ENCODE measurements at regions of chr11 and their contacts with region 1.

Region 1: DNA sequence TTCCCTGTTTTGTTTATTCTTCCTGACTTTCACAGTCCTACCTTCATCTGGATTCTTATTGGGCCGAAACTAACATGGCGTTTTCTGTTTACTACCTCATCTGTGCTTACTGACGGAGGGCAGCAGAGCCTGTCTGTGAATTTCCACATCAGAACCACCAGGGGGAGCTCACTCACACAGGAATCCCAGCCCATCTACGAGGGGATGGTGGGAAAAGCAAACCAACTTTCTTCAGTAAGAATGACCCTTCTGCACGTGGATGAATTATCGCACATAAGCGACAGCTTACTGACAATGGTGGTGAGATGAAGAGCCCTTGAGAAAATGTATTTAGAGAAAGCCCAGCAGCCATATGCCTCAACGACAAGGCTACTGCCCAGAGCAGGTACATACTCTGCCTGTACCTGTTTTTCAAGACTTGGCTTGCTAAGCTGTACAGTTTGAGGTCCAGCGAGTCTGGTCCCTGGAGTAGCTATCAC is 42.5 kb downstream of the LARGE2 start:
- DNase-seq: peak; percentile 38
- ATAC-seq: peak; percentile 98
- H3K4me3 ChIP-seq: no peak overlapping the region
- H3K27ac ChIP-seq: no peak overlapping the region
- H3K4me1 ChIP-seq: no peaks in the 10 kb centered on the region
- H3K27me3 ChIP-seq: no peaks in the 10 kb centered on the region
- CTCF ChIP-seq: peak; percentile 85 to 97 (median 90)
- EP300 ChIP-seq: no peak
- POLR2A ChIP-seq: no peak
- RAD21 ChIP-seq: peak; percentile 81

Region 2: GRCh38 chr11:45825261-45825660 is 139.7 kb before region 1 on chr11:
- CTCF ChIA-PET with region 1: no interaction called
- POLR2A ChIA-PET with region 1: no interaction called
- RAD21 ChIA-PET with region 1: no interaction called
- SMC1A ChIA-PET with region 1: no interaction called
- in situ Hi-C with region 1: no loop called
- intact Hi-C with region 1: no loop called
- DNase-seq: no peak
- ATAC-seq: no peak
- H3K4me3 ChIP-seq: no peak overlapping the region
- H3K27ac ChIP-seq: no peak overlapping the region
- H3K4me1 ChIP-seq: peaks cover 14% of the 10 kb centered on the region
- H3K27me3 ChIP-seq: peaks cover 0 to 5% of the 10 kb centered on the region in 2 experiments; a peak in 1 of 4 replicates
- CTCF ChIP-seq: no peak
- EP300 ChIP-seq: no peak
- POLR2A ChIP-seq: no peak
- RAD21 ChIP-seq: no peak

Region 3: GRCh38 chr11:45872513-45873356 is 92.2 kb before region 1 on chr11:
- CTCF ChIA-PET with region 1: interaction called, 27 read pairs
- POLR2A ChIA-PET with region 1: no interaction called
- RAD21 ChIA-PET with region 1: interaction called, 6 read pairs
- SMC1A ChIA-PET with region 1: interaction called, 7 read pairs
- in situ Hi-C with region 1: no loop called
- intact Hi-C with region 1: no loop called
- DNase-seq: no peak
- ATAC-seq: peak; percentile 97
- H3K4me3 ChIP-seq: no peak overlapping the region
- H3K27ac ChIP-seq: no peak overlapping the region
- H3K4me1 ChIP-seq: no peaks in the 10 kb centered on the region
- H3K27me3 ChIP-seq: no peaks in the 10 kb centered on the region
- CTCF ChIP-seq: peak; percentile 54 to 73 (median 63)
- EP300 ChIP-seq: no peak
- POLR2A ChIP-seq: no peak
- RAD21 ChIP-seq: peak; percentile 55

Region 4: DNA sequence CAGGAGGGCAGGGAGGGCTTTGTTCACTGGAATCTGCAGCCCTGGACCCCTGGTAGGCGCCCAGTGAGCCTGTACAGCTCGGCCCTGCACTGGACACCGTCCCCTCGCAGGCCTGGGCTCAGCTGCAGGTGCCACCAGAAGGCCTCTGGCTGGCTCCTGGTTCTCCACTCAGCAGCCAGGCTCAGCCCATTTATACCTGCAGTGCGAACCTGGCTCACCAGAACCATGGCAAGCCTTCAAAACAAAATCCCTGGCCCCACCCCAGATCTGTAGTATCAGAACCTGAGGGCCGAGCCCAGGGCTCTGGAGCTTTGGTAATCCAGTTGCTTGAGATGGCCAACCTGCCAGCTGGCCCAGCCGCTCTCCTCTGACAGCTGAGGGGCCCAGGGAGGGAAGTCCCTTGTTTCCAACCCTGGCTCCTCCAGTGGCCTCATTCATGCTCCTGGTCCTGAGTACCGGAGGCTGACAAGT is 57.0 kb before region 1 on chr11:
- CTCF ChIA-PET with region 1: no interaction called
- POLR2A ChIA-PET with region 1: no interaction called
- RAD21 ChIA-PET with region 1: no interaction called
- SMC1A ChIA-PET with region 1: no interaction called
- in situ Hi-C with region 1: no loop called
- intact Hi-C with region 1: no loop called
- DNase-seq: no peak
- ATAC-seq: no peak
- H3K4me3 ChIP-seq: no peak overlapping the region
- H3K27ac ChIP-seq: no peak overlapping the region
- H3K4me1 ChIP-seq: no peaks in the 10 kb centered on the region
- H3K27me3 ChIP-seq: no peaks in the 10 kb centered on the region
- CTCF ChIP-seq: no peak
- EP300 ChIP-seq: no peak
- POLR2A ChIP-seq: peak; percentile 39; the same call in 1 of the 2 replicates
- RAD21 ChIP-seq: no peak

Region 5: DNA sequence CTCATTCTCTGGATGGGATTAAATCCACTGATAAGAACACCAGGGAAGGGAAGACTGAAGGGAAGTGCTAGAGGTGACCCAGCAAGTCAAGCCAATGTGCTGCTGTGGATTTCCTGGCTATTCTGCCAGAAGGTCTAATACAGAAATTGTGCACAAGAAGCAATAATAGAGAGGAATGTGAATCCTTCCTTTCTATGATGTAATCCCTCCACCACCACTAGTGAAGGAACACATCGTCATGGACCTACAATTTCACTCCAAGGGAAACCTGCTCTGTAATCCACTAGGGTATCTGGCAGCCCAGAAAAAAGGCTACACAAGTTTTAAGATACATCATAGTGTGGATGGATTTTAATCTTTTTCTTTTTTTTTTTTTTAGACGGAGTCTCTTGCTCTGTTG is 25.1 kb before region 1 on chr11:
- CTCF ChIA-PET with region 1: interaction called, 34 read pairs
- POLR2A ChIA-PET with region 1: interaction called, 3 read pairs
- RAD21 ChIA-PET with region 1: interaction called, 4 read pairs
- SMC1A ChIA-PET with region 1: interaction called, 8 read pairs
- in situ Hi-C with region 1: no loop called
- intact Hi-C with region 1: no loop called
- DNase-seq: no peak
- ATAC-seq: no peak
- H3K4me3 ChIP-seq: no peak overlapping the region
- H3K27ac ChIP-seq: no peak overlapping the region
- H3K4me1 ChIP-seq: peaks cover 9% of the 10 kb centered on the region
- H3K27me3 ChIP-seq: no peaks in the 10 kb centered on the region
- CTCF ChIP-seq: no peak
- EP300 ChIP-seq: no peak
- POLR2A ChIP-seq: no peak
- RAD21 ChIP-seq: no peak

Region 6: DNA sequence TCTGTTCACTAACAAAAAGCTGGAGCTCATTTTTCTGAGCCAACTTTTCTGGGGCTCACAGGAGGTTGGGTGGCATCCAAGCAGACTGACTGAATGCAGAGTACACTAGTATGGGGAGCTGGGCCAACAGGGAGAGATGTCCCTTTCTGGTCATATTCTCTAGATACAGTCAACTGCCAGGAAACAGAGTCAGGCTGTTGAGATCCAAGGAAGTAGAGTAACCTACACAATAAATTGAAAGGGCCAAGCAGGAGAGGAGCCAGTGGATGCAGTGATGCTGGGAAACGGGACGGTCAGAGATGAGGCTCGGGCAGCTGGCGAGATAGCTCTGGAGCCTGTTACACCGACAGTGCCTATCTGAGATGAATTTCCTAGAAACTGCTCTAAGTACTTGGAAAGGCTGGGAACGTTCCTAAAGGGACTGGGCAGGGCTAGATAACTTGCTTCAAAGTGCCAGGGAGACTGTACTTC is 28.6 kb after region 1 on chr11:
- CTCF ChIA-PET with region 1: interaction called, 52 read pairs
- POLR2A ChIA-PET with region 1: no interaction called
- RAD21 ChIA-PET with region 1: no interaction called
- SMC1A ChIA-PET with region 1: interaction called, 5 read pairs
- in situ Hi-C with region 1: no loop called
- intact Hi-C with region 1: no loop called
- DNase-seq: no peak
- ATAC-seq: no peak
- H3K4me3 ChIP-seq: no peak overlapping the region
- H3K27ac ChIP-seq: no peak overlapping the region
- H3K4me1 ChIP-seq: no peaks in the 10 kb centered on the region
- H3K27me3 ChIP-seq: no peaks in the 10 kb centered on the region
- CTCF ChIP-seq: no peak
- EP300 ChIP-seq: no peak
- POLR2A ChIP-seq: no peak
- RAD21 ChIP-seq: no peak

Region 7: GRCh38 chr11:46116007-46116711 is 151.2 kb after region 1 on chr11:
- CTCF ChIA-PET with region 1: interaction called, 37 read pairs
- POLR2A ChIA-PET with region 1: no interaction called
- RAD21 ChIA-PET with region 1: interaction called, 10 read pairs
- SMC1A ChIA-PET with region 1: interaction called, 35 read pairs
- in situ Hi-C with region 1: no loop called
- intact Hi-C with region 1: no loop called
- DNase-seq: no peak
- ATAC-seq: no peak
- H3K4me3 ChIP-seq: peak overlapping the region; percentile 82; the same call in 1 of the 2 replicates
- H3K27ac ChIP-seq: peak overlapping the region; percentile 65
- H3K4me1 ChIP-seq: peaks cover 7% of the 10 kb centered on the region; the same call in 1 of the 2 replicates
- H3K27me3 ChIP-seq: no peaks in the 10 kb centered on the region
- CTCF ChIP-seq: no peak
- EP300 ChIP-seq: no peak
- POLR2A ChIP-seq: no peak
- RAD21 ChIP-seq: no peak

Region 8: DNA sequence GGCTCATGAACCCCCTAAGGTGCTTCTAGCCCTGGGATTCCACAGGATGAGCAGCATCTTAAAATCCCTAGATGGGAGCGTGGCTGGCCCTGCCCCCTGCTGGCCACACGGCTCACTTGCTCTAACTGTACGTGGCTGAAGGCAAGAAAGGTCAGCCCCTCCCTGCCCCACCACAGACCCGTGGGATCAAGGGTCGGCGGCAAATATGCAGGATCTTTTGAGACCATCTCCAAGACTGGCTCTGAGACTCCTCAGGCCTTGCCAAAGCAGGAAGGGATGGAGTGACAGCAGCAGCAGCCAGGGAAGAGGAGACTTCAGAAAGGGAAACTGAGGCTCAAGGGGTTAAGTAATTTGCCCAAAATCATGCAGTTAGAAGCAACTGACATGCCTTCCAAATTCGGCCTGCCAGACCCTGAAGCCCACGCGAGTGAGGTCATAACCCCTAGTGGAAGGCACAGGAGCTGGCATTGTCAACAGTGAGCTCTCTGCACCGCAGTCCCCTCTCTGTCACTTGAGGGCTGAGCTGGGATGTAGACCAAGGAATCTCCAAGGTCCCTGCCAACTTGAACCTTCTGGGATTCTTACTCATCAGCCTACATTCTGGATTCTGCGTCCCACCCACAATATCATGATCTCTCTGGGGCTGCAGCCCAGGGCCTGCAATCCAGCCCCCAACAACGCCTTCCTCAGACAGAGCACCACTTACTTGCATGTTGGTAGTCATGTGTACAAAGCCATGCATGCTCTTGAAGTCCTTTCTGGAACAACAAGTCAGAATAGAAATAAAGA is 343.9 kb after region 1 on chr11:
- CTCF ChIA-PET with region 1: interaction called, 26 read pairs
- POLR2A ChIA-PET with region 1: no interaction called
- RAD21 ChIA-PET with region 1: no interaction called
- SMC1A ChIA-PET with region 1: interaction called, 4 read pairs
- in situ Hi-C with region 1: no loop called
- intact Hi-C with region 1: loop called (anchors 10 kb)
- DNase-seq: no peak
- ATAC-seq: peak; percentile 90
- H3K4me3 ChIP-seq: no peak overlapping the region
- H3K27ac ChIP-seq: no peak overlapping the region
- H3K4me1 ChIP-seq: peaks cover 7% of the 10 kb centered on the region
- H3K27me3 ChIP-seq: no peaks in the 10 kb centered on the region; a peak in 1 of 4 replicates
- CTCF ChIP-seq: peak; percentile 85 to 96 (median 93)
- EP300 ChIP-seq: no peak
- POLR2A ChIP-seq: no peak
- RAD21 ChIP-seq: peak; percentile 88